MCF 10A (cell line): ENCODE measurements at regions of chr16 and their contacts with region 1.

Region 1: GRCh38 chr16:66872943-66873684 is 7.2 kb upstream of the PDP2 start:
- DNase-seq: peak; percentile 97
- H3K4me3 Mint-ChIP-seq: peak overlapping the region; percentile 71
- H3K27ac Mint-ChIP-seq: peak overlapping the region; percentile 51
- H3K4me1 Mint-ChIP-seq: peaks cover 14% of the 10 kb centered on the region
- H3K27me3 Mint-ChIP-seq: no peaks in the 10 kb centered on the region
- CTCF ChIP-seq: peak; percentile 90

Region 2: DNA sequence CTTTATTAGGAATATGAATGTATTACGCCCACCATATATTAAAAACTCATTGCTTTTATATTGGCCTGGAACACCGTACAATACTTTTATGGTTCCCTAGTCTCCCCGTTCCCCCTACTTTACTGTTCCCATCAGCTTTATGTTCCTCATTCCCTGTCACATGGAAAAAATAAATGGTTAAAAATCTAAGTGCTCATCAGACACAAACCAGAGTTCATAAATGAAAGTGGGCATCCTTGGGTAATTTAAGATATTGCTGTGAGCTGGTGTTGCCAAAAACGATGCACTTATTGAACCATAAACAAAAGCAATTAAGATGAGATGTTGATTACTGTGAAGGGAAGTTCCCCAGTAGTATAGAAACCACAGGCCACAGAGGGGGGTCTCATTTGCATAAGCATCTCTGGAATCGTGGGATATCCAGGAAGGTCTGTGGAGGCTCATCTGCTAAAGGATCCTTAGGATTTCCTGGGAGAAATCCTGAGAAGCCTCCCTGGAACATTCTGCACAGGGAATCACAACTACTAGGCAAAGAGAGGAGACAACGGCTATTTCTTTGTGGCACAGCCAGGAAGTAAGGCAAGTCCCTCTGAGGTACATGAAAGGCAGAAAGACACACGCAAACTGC is 1159.8 kb before region 1 on chr16:
- CTCF ChIA-PET with region 1: no interaction called
- POLR2A ChIA-PET with region 1: no interaction called
- intact Hi-C with region 1: no loop called
- DNase-seq: no peak
- H3K4me3 Mint-ChIP-seq: no peak overlapping the region
- H3K27ac Mint-ChIP-seq: no peak overlapping the region
- H3K4me1 Mint-ChIP-seq: no peaks in the 10 kb centered on the region
- H3K27me3 Mint-ChIP-seq: no peaks in the 10 kb centered on the region
- CTCF ChIP-seq: no peak

Region 3: DNA sequence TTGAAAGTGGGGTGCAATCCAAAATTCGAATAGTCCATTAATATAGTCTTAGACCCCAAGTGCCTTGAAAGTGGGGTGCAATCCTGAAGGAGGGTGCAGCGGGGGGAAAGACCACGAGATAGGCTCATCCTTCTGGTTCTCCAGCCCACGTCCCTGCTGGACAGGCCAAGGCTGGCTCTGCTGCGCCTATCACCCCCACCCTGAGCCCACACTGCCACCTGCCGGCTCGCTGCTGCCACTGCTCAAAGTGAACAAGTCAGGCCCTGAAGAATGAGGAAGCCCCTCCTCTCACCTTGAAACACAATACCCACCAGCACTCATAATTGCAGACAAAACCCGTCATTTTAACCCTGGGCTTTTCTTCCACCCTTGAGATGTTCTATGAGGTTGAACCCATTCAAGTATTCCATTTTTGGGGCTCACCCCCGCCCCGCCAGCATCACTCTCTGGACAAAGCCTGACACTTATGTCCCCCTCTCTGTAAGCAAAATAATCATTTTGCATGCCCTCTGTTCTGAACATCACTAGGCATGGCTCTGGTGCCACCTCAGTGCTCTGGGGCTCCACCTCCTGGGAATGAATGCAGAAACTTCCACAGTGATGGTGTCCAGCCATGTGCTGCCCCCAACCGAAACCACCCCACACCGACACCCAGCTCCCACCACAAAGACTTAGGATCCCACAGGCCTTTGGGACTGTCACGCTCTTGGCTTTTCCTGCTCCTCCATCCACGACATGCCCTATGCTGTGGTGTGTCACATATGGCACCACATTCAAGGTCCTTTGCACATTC is 389.2 kb before region 1 on chr16:
- CTCF ChIA-PET with region 1: interaction called, 4 read pairs
- POLR2A ChIA-PET with region 1: no interaction called
- intact Hi-C with region 1: loop called (anchors 5 kb)
- DNase-seq: peak; percentile 73
- H3K4me3 Mint-ChIP-seq: no peak overlapping the region
- H3K27ac Mint-ChIP-seq: no peak overlapping the region
- H3K4me1 Mint-ChIP-seq: peaks cover 33% of the 10 kb centered on the region
- H3K27me3 Mint-ChIP-seq: no peaks in the 10 kb centered on the region
- CTCF ChIP-seq: peak; percentile 96

Region 4: GRCh38 chr16:66639091-66639885 is 233.8 kb before region 1 on chr16:
- CTCF ChIA-PET with region 1: interaction called, 17 read pairs
- POLR2A ChIA-PET with region 1: no interaction called
- intact Hi-C with region 1: no loop called
- DNase-seq: peak; percentile 38
- H3K4me3 Mint-ChIP-seq: peak overlapping the region; percentile 56
- H3K27ac Mint-ChIP-seq: peak overlapping the region; percentile 98
- H3K4me1 Mint-ChIP-seq: peaks cover 18% of the 10 kb centered on the region
- H3K27me3 Mint-ChIP-seq: no peaks in the 10 kb centered on the region
- CTCF ChIP-seq: no peak

Region 5: DNA sequence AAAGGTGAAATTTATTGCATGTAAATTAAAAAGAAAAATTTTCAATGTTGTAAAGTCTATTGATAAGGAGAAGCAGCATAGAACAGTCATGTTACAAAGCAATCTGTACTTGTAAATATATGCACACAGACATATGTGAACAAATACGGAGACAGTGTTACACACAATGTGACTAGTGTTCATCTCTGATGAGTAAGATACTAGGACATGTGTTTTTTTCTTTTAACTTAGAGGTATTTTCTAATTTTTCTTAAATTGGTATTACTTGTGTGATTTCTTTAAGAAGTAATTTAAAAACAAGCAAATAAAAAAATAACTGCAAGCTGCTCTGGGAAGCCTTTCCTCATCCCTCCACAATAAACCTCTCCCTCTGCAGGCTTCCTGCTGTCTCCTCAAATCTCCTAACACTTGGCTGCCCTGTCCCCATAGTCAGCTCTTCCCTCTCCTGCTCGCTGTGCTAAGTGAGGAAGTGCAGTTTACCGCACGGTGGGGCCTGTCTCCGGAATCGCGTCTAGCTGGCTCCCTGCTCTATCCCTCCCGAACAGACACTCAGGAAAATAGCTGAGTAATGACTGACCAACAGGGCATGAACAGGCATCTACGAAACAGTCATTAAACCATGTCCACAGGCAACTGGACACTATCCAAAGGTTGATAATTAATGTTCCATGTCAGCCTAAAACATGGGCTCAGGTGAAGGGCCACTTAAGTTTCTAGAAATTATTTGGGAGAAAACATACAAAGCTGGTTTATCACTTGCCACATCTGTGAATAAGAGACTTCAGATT is 212.5 kb before region 1 on chr16:
- CTCF ChIA-PET with region 1: interaction called, 41 read pairs
- POLR2A ChIA-PET with region 1: interaction called, 4 read pairs
- intact Hi-C with region 1: loop called (anchors 1 kb)
- DNase-seq: peak; percentile 74
- H3K4me3 Mint-ChIP-seq: peak overlapping the region; percentile 34
- H3K27ac Mint-ChIP-seq: peak overlapping the region; percentile 78
- H3K4me1 Mint-ChIP-seq: peaks cover 25% of the 10 kb centered on the region
- H3K27me3 Mint-ChIP-seq: no peaks in the 10 kb centered on the region
- CTCF ChIP-seq: no peak

Region 6: DNA sequence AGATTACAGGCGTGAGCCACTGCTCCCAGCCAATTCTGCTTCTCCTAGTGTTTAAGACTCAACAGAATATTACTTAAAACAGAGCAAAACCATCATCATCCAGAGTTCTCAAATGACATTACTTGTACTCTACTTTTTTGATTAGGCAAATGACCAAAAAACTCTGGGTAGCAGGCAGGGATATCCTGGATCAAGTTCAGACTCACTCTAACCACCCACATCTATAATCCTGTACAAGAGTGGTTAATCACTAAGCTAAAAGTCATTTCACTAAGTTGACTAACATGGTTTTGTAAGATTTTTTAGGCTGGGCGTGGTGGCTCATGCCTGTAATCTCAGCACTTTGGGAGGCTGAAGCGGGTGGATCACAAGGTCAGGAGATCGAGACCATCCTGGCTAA is 49.1 kb before region 1 on chr16:
- CTCF ChIA-PET with region 1: interaction called, 197 read pairs
- POLR2A ChIA-PET with region 1: no interaction called
- intact Hi-C with region 1: no loop called
- DNase-seq: no peak
- H3K4me3 Mint-ChIP-seq: no peak overlapping the region
- H3K27ac Mint-ChIP-seq: no peak overlapping the region
- H3K4me1 Mint-ChIP-seq: peaks cover 14% of the 10 kb centered on the region
- H3K27me3 Mint-ChIP-seq: no peaks in the 10 kb centered on the region
- CTCF ChIP-seq: no peak

Region 7: DNA sequence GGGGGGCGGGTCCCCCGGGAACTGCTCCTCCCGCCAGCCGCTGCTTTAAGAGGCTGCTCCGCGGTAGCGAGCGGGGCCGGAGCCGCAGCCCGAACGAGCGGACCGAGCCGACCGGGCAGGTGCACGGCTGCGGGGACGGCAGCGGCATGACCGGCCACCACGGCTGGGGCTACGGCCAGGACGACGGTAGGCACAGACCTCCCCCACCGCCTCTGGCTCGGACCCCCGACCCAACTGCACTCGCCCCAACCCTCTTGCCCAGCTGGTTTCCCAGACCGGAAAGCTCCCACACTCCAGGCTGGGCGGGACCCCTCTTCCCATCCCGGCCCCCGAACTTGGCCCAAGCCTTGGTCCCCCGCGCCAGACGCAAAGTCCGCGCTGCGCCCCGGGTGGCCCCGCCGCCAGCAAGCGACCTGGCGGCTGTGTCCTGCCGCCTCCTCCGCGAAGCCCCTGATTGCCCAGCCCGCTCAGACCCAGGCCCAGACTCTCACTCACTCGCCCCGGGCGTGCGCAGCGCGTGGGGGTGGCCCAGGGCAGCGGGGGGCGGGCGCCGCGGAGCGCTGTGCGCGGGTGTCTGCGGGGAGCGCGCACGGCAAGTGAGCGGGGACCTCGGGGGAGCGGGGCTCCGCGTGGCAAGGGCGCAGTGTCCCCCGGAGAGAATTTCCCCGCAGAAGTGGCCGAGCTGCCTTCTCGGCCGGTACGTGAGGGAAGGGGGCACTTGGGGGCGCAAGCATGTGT is 28.6 kb before region 1 on chr16 and contains the start of gene CA7:
- CTCF ChIA-PET with region 1: interaction called, 39 read pairs
- POLR2A ChIA-PET with region 1: no interaction called
- intact Hi-C with region 1: no loop called
- DNase-seq: no peak
- H3K4me3 Mint-ChIP-seq: no peak within 1 kb of the TSS
- H3K27ac Mint-ChIP-seq: no peak within 1 kb of the TSS
- H3K4me1 Mint-ChIP-seq: peaks cover 7% of the 10 kb centered on the region
- H3K27me3 Mint-ChIP-seq: peaks cover 11% of the 10 kb centered on the region
- CTCF ChIP-seq: no peak
- total RNA-seq, gene CA7: not detected in 2 replicates

Region 8: GRCh38 chr16:66894948-66895688 is 22.0 kb after region 1 on chr16:
- CTCF ChIA-PET with region 1: interaction called, 11 read pairs
- POLR2A ChIA-PET with region 1: no interaction called
- intact Hi-C with region 1: no loop called
- DNase-seq: peak; percentile 80
- H3K4me3 Mint-ChIP-seq: no peak overlapping the region
- H3K27ac Mint-ChIP-seq: peak overlapping the region; percentile 92
- H3K4me1 Mint-ChIP-seq: peaks cover 29% of the 10 kb centered on the region
- H3K27me3 Mint-ChIP-seq: no peaks in the 10 kb centered on the region
- CTCF ChIP-seq: peak; percentile 79

Region 9: GRCh38 chr16:67246934-67247697 is 374.0 kb after region 1 on chr16 and contains the start of gene FHOD1:
- CTCF ChIA-PET with region 1: no interaction called
- POLR2A ChIA-PET with region 1: no interaction called
- intact Hi-C with region 1: no loop called
- DNase-seq: peak; percentile 97
- H3K4me3 Mint-ChIP-seq: peak within 1 kb of the TSS; percentile 81
- H3K27ac Mint-ChIP-seq: peak within 1 kb of the TSS; percentile 78
- H3K4me1 Mint-ChIP-seq: peaks cover 41% of the 10 kb centered on the region
- H3K27me3 Mint-ChIP-seq: peaks cover 18% of the 10 kb centered on the region
- CTCF ChIP-seq: no peak
- total RNA-seq, gene FHOD1: 12.1 and 14.7 TPM in 2 replicates